CD8-positive, alpha-beta memory T cell (primary cell): ENCODE measurements at regions of chr19 and their contacts with region 1.

Region 1: DNA sequence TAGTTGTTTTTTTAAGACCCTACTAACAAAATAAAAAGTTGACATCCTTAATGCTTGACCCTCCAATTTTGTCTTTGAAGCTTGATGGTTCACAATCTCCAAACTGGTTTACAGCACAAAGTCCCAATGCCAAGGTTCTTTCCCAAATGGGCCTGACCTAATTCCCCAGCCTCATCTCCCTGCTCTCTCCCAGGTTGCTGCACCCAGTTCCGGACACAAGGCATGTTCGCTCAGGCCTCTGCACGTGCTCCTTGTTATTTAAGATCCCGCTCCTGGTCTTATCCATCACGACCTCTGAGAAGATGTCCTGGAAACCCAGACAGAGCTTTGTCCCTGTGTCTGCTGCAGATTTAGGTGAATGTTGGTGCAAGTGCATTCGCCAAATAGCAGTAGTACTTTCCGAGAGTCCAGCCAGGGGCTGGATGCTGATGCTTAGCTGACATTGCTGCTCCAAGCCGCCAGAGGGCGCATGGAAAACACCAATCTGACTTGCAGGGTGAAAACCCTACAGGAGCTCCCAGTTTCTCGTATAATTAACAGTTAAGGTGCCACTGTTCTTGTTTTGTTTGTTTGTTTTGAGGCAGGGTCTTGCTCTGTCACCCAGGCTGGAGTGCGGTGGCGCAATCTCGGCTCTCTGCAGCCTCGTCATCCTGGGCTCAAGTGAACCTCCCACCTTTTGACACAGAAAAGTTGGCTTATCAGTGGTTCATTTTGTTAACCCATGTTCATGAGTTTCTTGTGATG is 18.5 kb downstream of the LYPD3 start:
- DNase-seq: peak; percentile 68 to 85 (median 70)
- H3K4me3 ChIP-seq: no peak overlapping the region
- H3K4me3 Mint-ChIP-seq: peak overlapping the region in 1 of 7 donors; percentile 27
- H3K27ac ChIP-seq: no peak overlapping the region
- H3K27ac Mint-ChIP-seq: peak overlapping the region in 6 of 8 donors; percentile 35 to 89 (median 75)
- H3K4me1 ChIP-seq: peaks cover 7% of the 10 kb centered on the region
- H3K4me1 Mint-ChIP-seq: peaks cover 5 to 21% (median 19%) of the 10 kb centered on the region in 3 donors
- H3K27me3 ChIP-seq: no peaks in the 10 kb centered on the region
- H3K27me3 Mint-ChIP-seq: no peaks in the 10 kb centered on the region

Region 2: GRCh38 chr19:43316592-43317319 is 130.2 kb before region 1 on chr19:
- CTCF ChIA-PET with region 1: no interaction called
- POLR2A ChIA-PET with region 1: no interaction called
- DNase-seq: no peak
- H3K4me3 ChIP-seq: no peak overlapping the region
- H3K4me3 Mint-ChIP-seq: no peak overlapping the region
- H3K27ac ChIP-seq: no peak overlapping the region
- H3K27ac Mint-ChIP-seq: no peak overlapping the region
- H3K4me1 ChIP-seq: no peaks in the 10 kb centered on the region
- H3K4me1 Mint-ChIP-seq: no peaks in the 10 kb centered on the region
- H3K27me3 ChIP-seq: no peaks in the 10 kb centered on the region
- H3K27me3 Mint-ChIP-seq: peaks cover 9 to 20% of the 10 kb centered on the region in 2 donors

Region 3: DNA sequence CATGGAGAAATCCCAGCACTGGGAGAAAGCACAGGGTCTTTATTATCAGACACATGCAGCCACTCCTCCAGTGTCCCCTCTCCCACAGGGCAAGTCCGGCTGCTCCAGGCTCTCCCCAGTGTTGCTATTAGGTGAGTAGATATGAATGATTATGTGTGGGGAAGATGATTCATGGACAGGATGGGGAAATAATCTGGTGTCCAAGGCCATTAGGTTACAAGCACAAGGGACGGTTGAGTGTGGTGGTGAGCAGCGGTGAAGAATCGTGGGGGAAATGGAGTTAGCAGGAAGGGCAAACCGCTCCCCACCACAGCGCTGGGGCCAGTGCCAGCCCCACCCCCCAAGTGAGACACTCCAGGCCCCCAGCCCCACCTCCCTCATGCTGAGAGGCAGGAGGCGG is 74.5 kb before region 1 on chr19:
- CTCF ChIA-PET with region 1: no interaction called
- POLR2A ChIA-PET with region 1: no interaction called
- DNase-seq: no peak
- H3K4me3 ChIP-seq: no peak overlapping the region
- H3K4me3 Mint-ChIP-seq: no peak overlapping the region
- H3K27ac ChIP-seq: no peak overlapping the region
- H3K27ac Mint-ChIP-seq: peak overlapping the region in 1 of 8 donors; percentile 50
- H3K4me1 ChIP-seq: no peaks in the 10 kb centered on the region
- H3K4me1 Mint-ChIP-seq: no peaks in the 10 kb centered on the region
- H3K27me3 ChIP-seq: no peaks in the 10 kb centered on the region
- H3K27me3 Mint-ChIP-seq: peaks cover 5 to 16% of the 10 kb centered on the region in 2 donors

Region 4: DNA sequence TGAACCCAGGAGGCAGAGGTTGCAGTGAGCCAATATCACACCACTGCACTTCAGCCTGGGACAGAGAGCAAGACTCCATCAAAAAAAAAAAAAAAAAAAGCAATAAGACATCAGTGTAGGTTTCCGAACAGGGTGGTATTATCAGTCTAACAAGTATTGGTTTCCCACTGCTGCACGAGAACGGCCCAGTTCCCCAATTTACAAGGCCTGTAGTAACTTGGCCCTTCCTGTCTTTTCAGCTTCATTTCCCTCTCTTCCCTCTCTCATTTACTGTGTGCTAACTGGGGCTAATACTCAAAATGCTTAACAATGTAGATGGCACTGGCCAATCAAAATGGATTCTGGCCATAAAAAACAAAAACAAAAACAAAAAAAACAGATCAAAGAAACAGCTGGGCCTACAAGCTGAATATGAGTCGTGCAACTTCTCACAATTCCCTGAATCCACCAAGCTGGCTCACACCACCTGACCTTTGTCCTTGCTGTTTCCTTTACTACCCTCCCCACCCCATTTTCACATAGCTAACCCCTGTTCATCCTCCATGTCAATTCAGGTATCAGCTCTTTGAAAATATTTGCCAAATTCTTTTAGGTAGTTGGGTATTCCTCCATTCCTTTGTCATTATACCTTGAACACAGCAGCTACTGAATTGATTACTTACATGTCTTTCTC is 29.8 kb before region 1 on chr19:
- CTCF ChIA-PET with region 1: no interaction called
- POLR2A ChIA-PET with region 1: no interaction called
- DNase-seq: no peak
- H3K4me3 ChIP-seq: no peak overlapping the region
- H3K4me3 Mint-ChIP-seq: no peak overlapping the region
- H3K27ac ChIP-seq: no peak overlapping the region
- H3K27ac Mint-ChIP-seq: no peak overlapping the region
- H3K4me1 ChIP-seq: no peaks in the 10 kb centered on the region
- H3K4me1 Mint-ChIP-seq: no peaks in the 10 kb centered on the region
- H3K27me3 ChIP-seq: no peaks in the 10 kb centered on the region
- H3K27me3 Mint-ChIP-seq: peaks cover 10 to 15% of the 10 kb centered on the region in 2 donors

Region 5: GRCh38 chr19:43457809-43458208 is 10.9 kb after region 1 on chr19:
- CTCF ChIA-PET with region 1: interaction called, 17 read pairs
- POLR2A ChIA-PET with region 1: no interaction called
- DNase-seq: no peak
- H3K4me3 ChIP-seq: no peak overlapping the region
- H3K4me3 Mint-ChIP-seq: no peak overlapping the region
- H3K27ac ChIP-seq: no peak overlapping the region
- H3K27ac Mint-ChIP-seq: no peak overlapping the region
- H3K4me1 ChIP-seq: peaks cover 7% of the 10 kb centered on the region
- H3K4me1 Mint-ChIP-seq: peaks cover 8 to 13% (median 9%) of the 10 kb centered on the region in 3 donors
- H3K27me3 ChIP-seq: no peaks in the 10 kb centered on the region
- H3K27me3 Mint-ChIP-seq: no peaks in the 10 kb centered on the region

Region 6: DNA sequence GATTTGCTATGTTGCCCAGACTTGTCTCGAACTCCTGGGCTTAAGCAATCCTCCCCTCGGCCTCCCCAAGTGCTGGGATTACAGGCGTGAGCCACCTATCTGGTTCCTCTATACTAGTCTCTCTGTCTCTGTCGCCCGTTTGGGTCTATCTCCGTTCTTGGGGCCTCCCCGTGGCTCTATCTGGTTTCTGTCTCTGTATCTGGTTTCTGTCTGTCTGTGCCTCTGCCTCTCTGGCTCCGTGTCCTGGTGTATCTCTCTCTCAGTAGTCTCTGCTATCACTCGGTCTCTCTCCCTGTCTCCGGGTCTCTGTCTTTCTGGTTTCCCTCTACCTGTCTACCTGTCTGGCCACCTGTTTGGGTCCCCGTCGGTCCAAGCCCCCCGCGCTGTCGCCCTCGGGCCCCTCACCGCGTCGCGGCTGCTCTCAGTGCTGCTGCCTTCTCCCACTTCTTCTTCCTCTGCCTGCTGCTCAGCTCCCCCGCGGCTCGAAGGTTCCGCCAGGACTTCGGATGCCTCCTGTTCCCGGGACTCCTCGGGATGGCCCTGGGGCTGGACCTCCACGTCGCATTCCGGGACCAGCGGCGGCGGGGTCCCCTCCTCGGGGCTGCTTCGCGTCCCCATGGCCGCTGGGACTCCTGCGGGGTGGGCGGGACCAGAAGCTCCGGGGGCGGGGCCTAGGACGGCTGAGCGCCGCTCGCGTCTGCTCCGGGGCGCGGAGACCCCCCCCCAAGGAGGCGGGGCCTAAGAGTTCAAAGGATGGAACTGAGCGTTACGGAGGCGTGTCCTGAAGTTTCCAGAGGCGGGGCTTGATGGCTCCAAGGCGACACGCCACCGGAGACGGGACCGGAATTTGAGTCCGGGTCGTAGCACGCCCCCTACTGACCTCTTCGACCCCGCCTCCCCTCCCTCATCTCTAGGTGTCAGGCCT is 56.8 kb after region 1 on chr19:
- CTCF ChIA-PET with region 1: interaction called, 14 read pairs
- POLR2A ChIA-PET with region 1: interaction called, 3 read pairs
- DNase-seq: peak; percentile 96 to 100 (median 99)
- H3K4me3 ChIP-seq: peak overlapping the region; percentile 96
- H3K4me3 Mint-ChIP-seq: peak overlapping the region; percentile 89 to 95 (median 93)
- H3K27ac ChIP-seq: peak overlapping the region; percentile 87
- H3K27ac Mint-ChIP-seq: peak overlapping the region; percentile 88 to 100 (median 96)
- H3K4me1 ChIP-seq: peaks cover 17% of the 10 kb centered on the region
- H3K4me1 Mint-ChIP-seq: peaks cover 23 to 47% (median 32%) of the 10 kb centered on the region in 3 donors
- H3K27me3 ChIP-seq: no peaks in the 10 kb centered on the region
- H3K27me3 Mint-ChIP-seq: no peaks in the 10 kb centered on the region

Region 7: GRCh38 chr19:43526884-43527859 is 80.3 kb after region 1 on chr19 and contains the start of gene ETHE1:
- CTCF ChIA-PET with region 1: interaction called, 316 read pairs
- POLR2A ChIA-PET with region 1: interaction called, 5 read pairs
- DNase-seq: peak; percentile 53 to 80 (median 69)
- H3K4me3 ChIP-seq: peak within 1 kb of the TSS; percentile 76
- H3K4me3 Mint-ChIP-seq: peak within 1 kb of the TSS; percentile 76 to 97 (median 81)
- H3K27ac ChIP-seq: peak within 1 kb of the TSS; percentile 49
- H3K27ac Mint-ChIP-seq: peak within 1 kb of the TSS; percentile 73 to 96 (median 91)
- H3K4me1 ChIP-seq: peaks cover 22% of the 10 kb centered on the region
- H3K4me1 Mint-ChIP-seq: peaks cover 22 to 35% (median 35%) of the 10 kb centered on the region in 3 donors
- H3K27me3 ChIP-seq: no peaks in the 10 kb centered on the region
- H3K27me3 Mint-ChIP-seq: no peaks in the 10 kb centered on the region
- total RNA-seq, gene ETHE1: 34.4 to 42.3 TPM

Region 8: DNA sequence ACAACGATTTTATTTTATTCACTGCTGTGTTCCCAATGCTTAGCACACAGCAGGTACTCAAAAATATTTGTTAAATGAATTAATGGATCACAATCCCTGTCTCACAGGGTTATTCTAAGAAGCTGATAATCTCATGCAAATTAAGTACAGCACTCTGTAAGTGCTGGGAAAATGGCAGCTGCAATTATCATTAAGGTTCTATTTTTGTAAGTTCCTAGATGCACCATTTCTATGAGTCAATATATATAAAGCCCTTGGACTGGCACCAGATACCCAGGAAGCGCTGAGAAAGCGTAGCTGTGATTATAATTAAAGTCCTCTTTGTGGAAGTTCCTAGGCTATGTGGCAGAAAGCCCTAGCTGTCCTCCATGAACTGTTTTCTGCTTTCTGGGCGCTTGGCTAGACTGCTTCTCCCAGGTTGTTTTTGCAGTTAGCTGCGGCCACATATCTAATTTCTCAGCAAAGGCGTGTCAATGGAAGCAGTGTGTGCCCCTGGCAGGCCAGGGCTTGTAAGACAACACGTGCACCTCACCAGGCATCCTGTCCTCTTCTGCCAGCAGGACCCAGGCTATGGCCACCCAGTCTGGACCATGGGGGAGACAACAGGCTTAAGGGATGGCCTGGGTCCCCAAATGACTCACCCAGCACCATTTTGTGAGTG is 159.8 kb after region 1 on chr19:
- CTCF ChIA-PET with region 1: no interaction called
- POLR2A ChIA-PET with region 1: interaction called, 15 read pairs
- DNase-seq: no peak
- H3K4me3 ChIP-seq: no peak overlapping the region
- H3K4me3 Mint-ChIP-seq: no peak overlapping the region
- H3K27ac ChIP-seq: no peak overlapping the region
- H3K27ac Mint-ChIP-seq: peak overlapping the region in 3 of 8 donors; percentile 56 to 90 (median 71)
- H3K4me1 ChIP-seq: no peaks in the 10 kb centered on the region
- H3K4me1 Mint-ChIP-seq: peaks cover 3 to 10% (median 7%) of the 10 kb centered on the region in 3 donors
- H3K27me3 ChIP-seq: no peaks in the 10 kb centered on the region
- H3K27me3 Mint-ChIP-seq: no peaks in the 10 kb centered on the region